Psoas muscle (tissue), 8 donors: ENCODE measurements at regions of chr20 and their contacts with region 1.

Region 1: GRCh38 chr20:543369-544152 is at the start of gene CSNK2A1:
- DNase-seq: peak; percentile 94 to 97
- ATAC-seq: peak; percentile 99
- H3K4me3 ChIP-seq: peak within 1 kb of the TSS; percentile 100
- H3K27ac ChIP-seq: peak within 1 kb of the TSS; percentile 93
- H3K4me1 ChIP-seq: peaks cover 38% of the 10 kb centered on the region
- H3K27me3 ChIP-seq: no peaks in the 10 kb centered on the region
- CTCF ChIP-seq: no peak
- total RNA-seq, gene CSNK2A1: 118 to 180 (median 140) TPM

Region 2: GRCh38 chr20:407133-407952 is 136.2 kb before region 1 on chr20:
- intact Hi-C with region 1: loop called in 1 of 2 experiments (anchors 10 kb)
- DNase-seq: peak; percentile 77 to 88
- ATAC-seq: peak; percentile 63 to 72 (median 69)
- H3K4me3 ChIP-seq: peak overlapping the region; percentile 91
- H3K27ac ChIP-seq: peak overlapping the region; percentile 95
- H3K4me1 ChIP-seq: peaks cover 27% of the 10 kb centered on the region
- H3K27me3 ChIP-seq: no peaks in the 10 kb centered on the region
- CTCF ChIP-seq: peak; percentile 14

Region 3: GRCh38 chr20:496126-496696 is 47.4 kb before region 1 on chr20:
- intact Hi-C with region 1: loop called in 1 of 2 experiments (anchors 5 kb)
- DNase-seq: no peak
- ATAC-seq: peak; percentile 93 to 97 (median 94)
- H3K4me3 ChIP-seq: no peak overlapping the region
- H3K27ac ChIP-seq: peak overlapping the region; percentile 64
- H3K4me1 ChIP-seq: peaks cover 24% of the 10 kb centered on the region
- H3K27me3 ChIP-seq: no peaks in the 10 kb centered on the region
- CTCF ChIP-seq: no peak

Region 4: DNA sequence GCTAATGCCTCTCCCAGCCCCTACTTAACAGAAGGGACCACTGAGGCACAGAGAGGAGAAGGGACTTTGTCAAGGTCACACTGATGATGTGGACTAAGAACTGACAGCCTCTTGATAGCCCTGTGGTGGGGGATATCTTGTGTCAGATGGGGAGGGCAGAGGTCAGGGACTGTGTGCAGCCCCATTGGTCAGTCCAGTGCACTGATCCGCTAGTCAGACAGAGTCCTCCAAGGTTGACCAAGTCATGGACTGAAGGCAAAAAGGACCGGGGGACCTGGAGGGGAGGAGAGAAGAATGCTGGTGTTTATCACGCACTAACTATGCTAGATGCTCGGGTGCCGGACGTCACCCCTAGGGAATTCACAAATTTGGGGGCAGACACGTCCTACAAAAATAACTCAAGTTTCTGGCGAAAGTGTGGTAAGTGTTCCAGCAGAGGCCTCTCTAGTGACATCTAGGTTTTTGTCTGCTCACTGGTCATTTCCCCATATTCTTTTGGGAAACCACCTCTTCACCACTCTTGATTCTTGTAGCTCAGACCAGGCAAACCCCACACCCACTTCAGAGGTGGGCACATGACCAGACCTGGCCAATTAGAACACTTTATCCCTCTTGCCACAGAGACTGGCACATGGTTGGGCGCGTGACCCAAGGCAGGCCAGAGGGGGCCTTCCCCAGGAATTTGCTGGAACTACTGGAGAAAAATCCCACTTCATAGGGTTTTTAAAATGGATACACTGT is 45.5 kb after region 1 on chr20:
- intact Hi-C with region 1: no loop called
- DNase-seq: no peak
- ATAC-seq: no peak
- H3K4me3 ChIP-seq: no peak overlapping the region
- H3K27ac ChIP-seq: no peak overlapping the region
- H3K4me1 ChIP-seq: no peaks in the 10 kb centered on the region
- H3K27me3 ChIP-seq: no peaks in the 10 kb centered on the region
- CTCF ChIP-seq: no peak

Region 5: GRCh38 chr20:760751-761417 is 217.3 kb after region 1 on chr20:
- intact Hi-C with region 1: no loop called
- DNase-seq: no peak
- ATAC-seq: peak in 2 of 4 donors; percentile 53 to 72
- H3K4me3 ChIP-seq: no peak overlapping the region
- H3K27ac ChIP-seq: no peak overlapping the region
- H3K4me1 ChIP-seq: no peaks in the 10 kb centered on the region
- H3K27me3 ChIP-seq: peaks cover 0 to 29% (median 0%) of the 10 kb centered on the region in 3 donors
- CTCF ChIP-seq: peak; percentile 45